ENCODE measurements at regions of chr9 and their contacts with region 1.

Region 1: DNA sequence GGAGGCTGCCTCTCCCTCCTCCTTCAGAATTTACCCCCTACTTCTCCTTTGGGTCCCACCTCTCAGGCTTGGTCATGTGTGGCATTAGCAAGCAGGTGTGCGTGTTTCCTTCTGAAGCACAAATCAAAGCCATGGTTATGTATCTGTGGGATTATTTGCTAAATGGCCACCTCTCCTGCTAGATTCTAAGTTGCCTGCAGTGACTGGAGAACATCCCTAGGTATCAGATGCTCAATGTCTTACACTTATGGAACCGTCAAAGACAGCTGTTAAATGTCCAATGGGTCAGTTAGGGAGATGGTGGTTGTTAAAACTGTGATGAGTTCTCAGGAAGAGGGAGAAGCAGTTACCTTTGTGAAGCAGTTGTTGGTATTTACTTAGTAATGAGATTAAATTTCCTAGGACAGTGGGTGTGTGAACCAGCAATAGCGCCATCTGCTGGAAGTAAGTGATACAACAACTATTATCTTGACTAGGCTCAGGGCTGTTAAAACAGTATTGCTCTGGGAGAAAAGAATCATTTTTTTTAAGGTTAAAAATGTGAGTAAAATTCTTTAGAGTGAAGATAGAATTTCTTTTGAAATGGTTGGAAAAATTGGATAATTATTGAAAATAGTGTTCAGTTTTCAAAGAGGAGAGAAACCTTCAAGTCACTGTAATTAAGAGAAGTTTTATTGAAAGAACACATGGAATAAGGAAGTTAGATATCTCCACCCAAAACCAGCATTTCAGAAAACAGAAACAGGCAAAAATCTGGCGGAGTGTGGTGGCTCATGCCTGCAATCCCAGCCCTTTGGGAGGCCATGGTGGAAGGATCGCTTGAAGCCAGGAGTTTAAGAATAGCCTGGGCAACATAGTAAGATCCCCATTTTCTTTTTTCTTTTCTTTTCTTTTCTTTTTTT is 71.3 kb downstream of the TMC1 start:
- DNase-seq: no peak
- ATAC-seq: peak; percentile 86
- H3K4me3 ChIP-seq: no peak overlapping the region
- H3K27ac ChIP-seq: no peak overlapping the region
- H3K4me1 ChIP-seq: peaks cover 0 to 1% of the 10 kb centered on the region in 2 donors
- H3K27me3 ChIP-seq: no peaks in the 10 kb centered on the region

Region 2: GRCh38 chr9:72280913-72281500 is 311.7 kb before region 1 on chr9:
- intact Hi-C with region 1: loop called (anchors 5 kb)
- DNase-seq: peak; percentile 76 to 83
- ATAC-seq: peak; percentile 86
- H3K4me3 ChIP-seq: no peak overlapping the region
- H3K27ac ChIP-seq: no peak overlapping the region
- H3K4me1 ChIP-seq: no peaks in the 10 kb centered on the region
- H3K27me3 ChIP-seq: no peaks in the 10 kb centered on the region